ENCODE measurements at regions of chr21 and their contacts with region 1.

Region 1: GRCh38 chr21:38126669-38127303 is 130.0 kb upstream of the KCNJ15 start:
- DNase-seq: peak; percentile 74
- H3K4me3 Mint-ChIP-seq: no peak overlapping the region
- H3K27ac Mint-ChIP-seq: no peak overlapping the region
- H3K4me1 Mint-ChIP-seq: peaks cover 7% of the 10 kb centered on the region
- H3K27me3 Mint-ChIP-seq: peaks cover 6% of the 10 kb centered on the region

Region 2: DNA sequence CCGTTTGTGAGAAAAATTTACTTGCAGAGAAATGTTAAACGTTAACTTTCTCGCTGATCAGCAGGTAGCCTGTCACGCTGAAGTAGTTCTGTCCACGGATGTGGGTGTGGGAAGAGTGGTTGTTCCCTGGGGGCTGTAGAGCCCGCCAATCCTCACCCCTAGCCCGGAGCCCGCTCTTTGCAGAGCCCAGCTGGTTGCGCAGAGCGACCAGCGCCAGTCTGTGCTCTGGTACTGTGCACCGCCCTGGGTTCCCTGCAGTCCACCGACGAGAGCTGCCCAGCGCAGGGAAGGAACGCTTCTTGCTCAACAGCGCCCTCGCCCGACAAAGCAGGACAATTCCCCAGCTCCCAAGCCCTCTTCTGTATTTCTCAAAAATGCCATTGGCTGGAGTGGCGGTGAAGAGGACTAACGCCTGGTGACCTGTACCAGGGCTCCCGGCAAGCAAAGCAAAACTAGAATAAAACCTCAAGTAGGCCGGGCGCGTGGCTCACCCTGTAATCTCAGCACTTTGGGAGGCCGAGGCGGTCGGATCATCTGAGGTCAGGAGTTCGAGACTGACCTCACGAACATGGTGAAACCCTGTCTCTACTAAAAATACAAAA is 1116.9 kb before region 1 on chr21:
- CTCF ChIA-PET with region 1: no interaction called
- DNase-seq: peak; percentile 86
- H3K4me3 Mint-ChIP-seq: peak overlapping the region; percentile 41
- H3K27ac Mint-ChIP-seq: no peak overlapping the region
- H3K4me1 Mint-ChIP-seq: peaks cover 20% of the 10 kb centered on the region
- H3K27me3 Mint-ChIP-seq: peaks cover 80% of the 10 kb centered on the region

Region 3: DNA sequence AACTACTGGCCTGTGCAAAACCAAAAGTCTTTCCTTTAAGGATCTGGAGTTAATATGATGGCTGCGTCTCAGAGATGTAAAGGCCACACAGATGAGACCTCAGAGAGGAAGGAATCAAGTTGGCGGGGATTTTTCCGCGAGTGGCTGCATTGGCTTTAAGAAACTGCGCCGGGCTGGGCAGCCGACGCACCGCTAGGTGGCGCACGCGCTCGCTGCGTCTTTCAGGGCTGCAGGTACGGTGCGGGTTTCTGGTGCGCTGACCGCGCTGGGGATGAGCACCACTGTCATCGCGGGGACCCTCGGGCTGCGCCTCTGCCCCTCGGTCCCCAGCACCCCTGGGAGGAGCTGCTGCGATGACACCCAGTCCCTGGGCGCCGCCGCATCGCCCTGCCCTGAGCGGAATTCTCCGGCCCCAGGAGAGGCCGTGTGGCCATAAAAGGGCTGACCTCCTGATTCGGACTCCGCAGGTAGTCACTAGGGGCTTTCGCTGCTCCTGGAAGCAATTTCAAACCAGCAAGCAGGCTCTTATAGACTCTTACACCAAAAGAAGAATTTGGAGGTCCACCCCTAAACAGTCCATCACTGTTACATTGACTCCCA is 451.5 kb before region 1 on chr21:
- CTCF ChIA-PET with region 1: interaction called, 11 read pairs
- DNase-seq: peak; percentile 73
- H3K4me3 Mint-ChIP-seq: no peak overlapping the region
- H3K27ac Mint-ChIP-seq: no peak overlapping the region
- H3K4me1 Mint-ChIP-seq: peaks cover 2% of the 10 kb centered on the region
- H3K27me3 Mint-ChIP-seq: peaks cover 36% of the 10 kb centered on the region

Region 4: DNA sequence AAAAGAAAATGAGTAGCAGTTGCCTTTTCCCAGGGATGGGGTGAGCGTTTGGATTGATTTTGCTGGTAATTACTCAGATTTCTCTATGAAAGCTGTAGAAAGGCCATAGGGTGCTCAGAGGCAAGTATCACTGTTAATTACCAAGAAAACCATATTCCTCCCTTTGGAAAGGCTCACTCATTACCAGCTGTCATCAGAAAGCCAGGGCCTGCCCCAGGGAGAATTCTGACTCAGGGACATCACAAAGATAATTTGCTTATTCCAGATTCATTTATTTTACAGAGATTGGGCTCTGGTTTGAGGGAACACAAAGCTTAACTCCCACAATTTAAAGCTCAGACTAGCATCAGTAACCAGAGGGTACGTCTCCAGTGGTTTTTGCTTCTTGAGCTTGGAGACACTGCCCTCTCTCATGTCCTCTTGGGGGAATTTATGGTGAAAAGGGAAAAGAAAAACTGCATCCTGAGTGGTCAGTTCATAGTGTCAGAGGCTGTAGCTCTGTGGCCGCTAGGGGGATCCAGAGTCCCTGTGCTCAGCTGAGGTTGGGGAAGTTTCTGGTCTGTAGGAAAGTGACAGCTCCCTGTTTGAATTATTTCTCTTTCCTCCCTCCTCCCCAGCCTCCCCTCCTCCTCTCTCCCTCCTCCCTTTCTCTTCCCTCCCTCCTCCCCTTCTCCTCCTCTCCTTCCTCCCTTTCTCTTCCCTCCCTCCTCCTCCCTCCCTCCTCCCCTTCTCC is 414.8 kb before region 1 on chr21:
- CTCF ChIA-PET with region 1: interaction called, 13 read pairs
- DNase-seq: peak; percentile 64
- H3K4me3 Mint-ChIP-seq: no peak overlapping the region
- H3K27ac Mint-ChIP-seq: no peak overlapping the region
- H3K4me1 Mint-ChIP-seq: no peaks in the 10 kb centered on the region
- H3K27me3 Mint-ChIP-seq: peaks cover 10% of the 10 kb centered on the region

Region 5: DNA sequence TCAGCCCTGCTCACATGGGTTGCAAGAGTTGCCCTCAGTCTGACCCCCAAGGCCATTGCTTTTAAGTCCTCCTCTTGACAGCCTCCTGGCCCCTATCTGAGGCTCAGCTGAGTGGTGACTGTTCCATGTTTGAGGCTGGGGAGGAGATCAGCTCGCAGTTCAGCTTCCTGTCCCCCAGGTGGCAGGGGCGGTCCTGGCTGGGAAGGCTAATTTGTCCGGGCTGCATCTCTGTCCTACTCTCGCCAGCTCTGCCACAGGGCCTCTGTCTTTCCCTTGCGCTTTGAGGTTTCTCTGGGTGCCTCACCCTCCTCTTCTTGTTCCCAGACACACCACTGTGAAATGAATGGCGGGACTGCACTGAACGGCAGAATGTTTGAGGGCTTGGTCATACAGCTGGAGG is 367.8 kb before region 1 on chr21:
- CTCF ChIA-PET with region 1: interaction called, 13 read pairs
- DNase-seq: peak; percentile 34
- H3K4me3 Mint-ChIP-seq: no peak overlapping the region
- H3K27ac Mint-ChIP-seq: no peak overlapping the region
- H3K4me1 Mint-ChIP-seq: no peaks in the 10 kb centered on the region
- H3K27me3 Mint-ChIP-seq: no peaks in the 10 kb centered on the region

Region 6: GRCh38 chr21:37878946-37879660 is 247.7 kb before region 1 on chr21:
- CTCF ChIA-PET with region 1: no interaction called
- DNase-seq: no peak
- H3K4me3 Mint-ChIP-seq: no peak overlapping the region
- H3K27ac Mint-ChIP-seq: no peak overlapping the region
- H3K4me1 Mint-ChIP-seq: no peaks in the 10 kb centered on the region
- H3K27me3 Mint-ChIP-seq: no peaks in the 10 kb centered on the region